ENCODE measurements at regions of chr1 and their contacts with region 1.

Region 1: DNA sequence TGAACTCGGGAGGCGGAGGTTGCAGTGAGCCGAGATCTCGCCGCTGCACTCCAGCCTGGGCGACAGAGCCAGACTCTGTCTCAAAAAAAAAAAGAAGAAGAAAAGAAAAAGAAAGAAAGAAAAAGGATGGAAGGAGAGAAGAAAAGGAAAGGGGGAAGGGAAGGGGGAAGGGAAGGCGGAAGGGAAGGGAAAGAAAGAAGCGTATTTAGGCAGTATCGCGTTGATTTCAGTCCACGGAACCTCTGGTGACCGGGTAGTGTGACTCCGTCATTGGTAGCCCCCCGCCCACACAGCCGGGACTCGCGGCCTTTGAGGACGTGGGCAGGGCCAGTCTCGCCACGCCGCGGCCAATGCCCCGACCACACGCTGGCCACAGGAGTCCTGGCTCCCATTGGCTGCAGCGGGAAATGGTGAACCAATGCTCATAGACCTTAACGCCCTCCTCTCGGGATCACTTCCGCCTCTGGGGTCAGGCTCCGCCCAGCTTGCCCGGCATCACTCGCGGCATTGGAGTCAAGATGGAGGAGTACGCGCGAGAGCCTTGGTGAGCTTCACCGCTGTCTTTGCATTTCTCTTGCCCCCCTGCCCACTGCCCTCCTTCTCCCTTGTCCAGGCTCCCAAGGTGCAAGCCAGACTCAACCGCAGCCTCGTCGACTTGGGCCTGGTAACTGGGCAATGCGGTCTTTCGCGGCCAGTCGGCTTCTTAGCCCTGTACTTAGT is at the start of gene TIMM17A:
- DNase-seq: peak; percentile 84 to 94 (median 90)
- ATAC-seq: peak; percentile 99
- H3K4me3 ChIP-seq: peak within 1 kb of the TSS; percentile 97
- H3K4me3 Mint-ChIP-seq: peak within 1 kb of the TSS; percentile 90 to 100 (median 98)
- H3K27ac ChIP-seq: peak within 1 kb of the TSS; percentile 83
- H3K27ac Mint-ChIP-seq: peak within 1 kb of the TSS; percentile 89 to 99 (median 97)
- H3K4me1 ChIP-seq: peaks cover 11 to 14% of the 10 kb centered on the region in 2 donors
- H3K4me1 Mint-ChIP-seq: peaks cover 15 to 32% (median 25%) of the 10 kb centered on the region in 7 donors
- H3K27me3 ChIP-seq: no peaks in the 10 kb centered on the region
- H3K27me3 Mint-ChIP-seq: peaks cover 0 to 2% (median 0%) of the 10 kb centered on the region in 5 donors
- total RNA-seq, gene TIMM17A: 27.1 to 58.4 (median 43.1) TPM

Region 2: GRCh38 chr1:201500670-201501120 is 454.5 kb before region 1 on chr1:
- CTCF ChIA-PET with region 1: interaction called, 10 read pairs
- POLR2A ChIA-PET with region 1: no interaction called
- intact Hi-C with region 1: loop called in 1 of 2 experiments (anchors 5 kb)
- DNase-seq: no peak
- ATAC-seq: no peak
- H3K4me3 ChIP-seq: no peak overlapping the region
- H3K4me3 Mint-ChIP-seq: no peak overlapping the region
- H3K27ac ChIP-seq: no peak overlapping the region
- H3K27ac Mint-ChIP-seq: no peak overlapping the region
- H3K4me1 ChIP-seq: peaks cover 3 to 8% of the 10 kb centered on the region in 2 donors
- H3K4me1 Mint-ChIP-seq: peaks cover 23 to 35% (median 28%) of the 10 kb centered on the region in 7 donors
- H3K27me3 ChIP-seq: no peaks in the 10 kb centered on the region
- H3K27me3 Mint-ChIP-seq: no peaks in the 10 kb centered on the region

Region 3: GRCh38 chr1:201828820-201829774 is 126.1 kb before region 1 on chr1 and contains the start of gene IPO9:
- CTCF ChIA-PET with region 1: no interaction called
- POLR2A ChIA-PET with region 1: no interaction called
- intact Hi-C with region 1: loop called (anchors 1 kb)
- DNase-seq: peak; percentile 89 to 96 (median 95)
- ATAC-seq: peak; percentile 98
- H3K4me3 ChIP-seq: peak within 1 kb of the TSS; percentile 97
- H3K4me3 Mint-ChIP-seq: peak within 1 kb of the TSS; percentile 90 to 100 (median 96)
- H3K27ac ChIP-seq: peak within 1 kb of the TSS; percentile 93
- H3K27ac Mint-ChIP-seq: peak within 1 kb of the TSS; percentile 80 to 97 (median 91)
- H3K4me1 ChIP-seq: peaks cover 16 to 19% of the 10 kb centered on the region in 2 donors
- H3K4me1 Mint-ChIP-seq: peaks cover 29 to 55% (median 41%) of the 10 kb centered on the region in 7 donors
- H3K27me3 ChIP-seq: no peaks in the 10 kb centered on the region
- H3K27me3 Mint-ChIP-seq: no peaks in the 10 kb centered on the region
- total RNA-seq, gene IPO9: 28.7 to 55.3 (median 37.9) TPM

Region 4: DNA sequence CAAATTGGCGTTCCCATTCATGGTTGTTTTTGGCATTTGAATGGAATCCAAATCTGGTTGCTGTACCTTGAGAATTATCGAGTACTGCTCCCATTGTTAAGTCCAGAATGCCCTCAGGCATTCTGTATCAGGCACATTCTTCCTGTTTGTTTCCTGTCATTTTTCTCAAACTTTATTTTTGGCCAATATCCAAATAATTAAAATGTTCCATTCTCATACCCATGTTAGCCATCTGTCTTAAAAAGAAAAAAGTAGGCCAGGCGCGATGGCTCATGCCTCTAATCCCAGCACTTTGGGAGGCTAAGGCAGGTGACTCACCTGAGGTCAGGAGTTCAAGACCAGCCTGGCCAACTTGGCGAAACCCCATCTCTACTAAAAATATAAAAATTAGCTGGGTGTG is 95.7 kb before region 1 on chr1:
- CTCF ChIA-PET with region 1: no interaction called
- POLR2A ChIA-PET with region 1: no interaction called
- intact Hi-C with region 1: no loop called
- DNase-seq: no peak
- ATAC-seq: no peak
- H3K4me3 ChIP-seq: no peak overlapping the region
- H3K4me3 Mint-ChIP-seq: no peak overlapping the region
- H3K27ac ChIP-seq: no peak overlapping the region
- H3K27ac Mint-ChIP-seq: peak overlapping the region in 2 of 9 donors; percentile 39 to 44
- H3K4me1 ChIP-seq: no peaks in the 10 kb centered on the region
- H3K4me1 Mint-ChIP-seq: peaks cover 0 to 6% (median 0%) of the 10 kb centered on the region in 7 donors
- H3K27me3 ChIP-seq: no peaks in the 10 kb centered on the region
- H3K27me3 Mint-ChIP-seq: no peaks in the 10 kb centered on the region

Region 5: GRCh38 chr1:201938440-201939035 is 16.6 kb before region 1 on chr1:
- CTCF ChIA-PET with region 1: no interaction called
- POLR2A ChIA-PET with region 1: no interaction called
- intact Hi-C with region 1: no loop called
- DNase-seq: no peak
- ATAC-seq: no peak
- H3K4me3 ChIP-seq: no peak overlapping the region
- H3K4me3 Mint-ChIP-seq: no peak overlapping the region
- H3K27ac ChIP-seq: no peak overlapping the region
- H3K27ac Mint-ChIP-seq: no peak overlapping the region
- H3K4me1 ChIP-seq: no peaks in the 10 kb centered on the region
- H3K4me1 Mint-ChIP-seq: no peaks in the 10 kb centered on the region
- H3K27me3 ChIP-seq: no peaks in the 10 kb centered on the region
- H3K27me3 Mint-ChIP-seq: peaks cover 5 to 33% (median 10%) of the 10 kb centered on the region in 5 donors

Region 6: GRCh38 chr1:201982623-201983379 is 27.6 kb after region 1 on chr1 and contains the start of gene RNPEP:
- CTCF ChIA-PET with region 1: interaction called, 5 read pairs
- POLR2A ChIA-PET with region 1: interaction called, 5 read pairs
- intact Hi-C with region 1: loop called (anchors 1 kb)
- DNase-seq: peak; percentile 42 to 61 (median 58)
- ATAC-seq: peak; percentile 84
- H3K4me3 ChIP-seq: peak within 1 kb of the TSS; percentile 61
- H3K4me3 Mint-ChIP-seq: peak within 1 kb of the TSS; percentile 92 to 100 (median 97)
- H3K27ac ChIP-seq: peak within 1 kb of the TSS; percentile 82
- H3K27ac Mint-ChIP-seq: peak within 1 kb of the TSS; percentile 81 to 98 (median 93)
- H3K4me1 ChIP-seq: peaks cover 7 to 8% of the 10 kb centered on the region in 2 donors
- H3K4me1 Mint-ChIP-seq: peaks cover 18 to 34% (median 24%) of the 10 kb centered on the region in 7 donors
- H3K27me3 ChIP-seq: no peaks in the 10 kb centered on the region
- H3K27me3 Mint-ChIP-seq: peaks cover 0 to 16% (median 0%) of the 10 kb centered on the region in 5 donors
- total RNA-seq, gene RNPEP: 19.4 to 43.4 (median 26.8) TPM

Region 7: GRCh38 chr1:202348509-202349205 is 393.5 kb after region 1 on chr1 and contains the start of gene PPP1R12B:
- CTCF ChIA-PET with region 1: no interaction called
- POLR2A ChIA-PET with region 1: no interaction called
- intact Hi-C with region 1: loop called (anchors 2 to 10 kb)
- DNase-seq: peak; percentile 83 to 95 (median 92)
- ATAC-seq: peak; percentile 98
- H3K4me3 ChIP-seq: peak within 1 kb of the TSS; percentile 82
- H3K4me3 Mint-ChIP-seq: peak within 1 kb of the TSS; percentile 87 to 97 (median 93)
- H3K27ac ChIP-seq: peak within 1 kb of the TSS; percentile 73
- H3K27ac Mint-ChIP-seq: peak within 1 kb of the TSS; percentile 64 to 97 (median 86)
- H3K4me1 ChIP-seq: peaks cover 3 to 16% of the 10 kb centered on the region in 2 donors
- H3K4me1 Mint-ChIP-seq: peaks cover 22 to 40% (median 34%) of the 10 kb centered on the region in 7 donors
- H3K27me3 ChIP-seq: no peaks in the 10 kb centered on the region
- H3K27me3 Mint-ChIP-seq: no peaks in the 10 kb centered on the region
- total RNA-seq, gene PPP1R12B: 23.6 to 38.1 (median 31.0) TPM

Measured in naive thymus-derived CD4-positive, alpha-beta T cell (primary cell).